Endothelial cell of umbilical vein (primary cell): ENCODE measurements at regions of chr3 and their contacts with region 1.

Region 1: DNA sequence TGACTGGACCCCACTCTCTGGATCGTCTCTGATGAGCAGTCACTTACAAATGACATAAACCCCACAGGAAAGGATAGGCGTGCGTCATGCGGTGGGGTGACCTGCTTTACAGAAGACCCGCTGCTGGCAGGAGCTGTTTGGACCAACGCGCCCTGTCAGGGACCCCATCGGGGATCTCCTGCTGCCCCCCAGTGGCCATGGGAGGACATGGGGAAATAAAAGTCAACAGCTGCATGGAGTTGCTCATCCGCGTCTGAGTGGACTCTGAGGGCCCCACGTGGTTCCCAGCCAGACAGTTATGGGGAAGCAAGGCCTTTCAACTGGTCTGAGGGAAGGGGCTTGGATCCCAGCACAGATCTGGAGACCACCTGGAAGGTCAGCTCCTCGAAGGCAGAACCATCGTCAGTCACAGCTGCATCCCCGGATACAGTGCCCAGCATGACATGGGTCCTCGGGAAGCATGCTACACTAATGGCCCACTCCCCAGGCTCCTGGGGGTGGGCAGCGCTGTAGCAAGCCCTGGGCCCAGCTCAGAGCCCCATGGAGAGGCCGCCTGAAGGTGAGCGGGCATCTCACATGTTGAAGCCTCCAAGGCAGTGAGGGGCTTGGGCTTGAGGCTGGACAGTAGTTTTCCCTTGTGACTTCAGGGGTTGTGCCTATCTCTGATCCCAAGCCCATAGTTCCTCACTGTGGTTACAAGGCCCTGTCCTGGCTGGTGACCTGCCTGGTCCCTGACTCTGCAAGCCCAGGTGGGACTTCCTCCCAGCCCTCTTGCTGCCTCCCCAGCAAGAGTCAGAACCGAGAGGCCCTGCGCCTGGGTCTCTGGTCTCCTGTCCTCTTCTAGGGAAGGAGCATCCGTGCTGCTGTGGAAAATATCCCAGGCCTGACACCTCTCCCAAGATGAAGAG is 32.3 kb downstream of the PTH1R start:
- DNase-seq: peak; percentile 81
- H3K4me3 ChIP-seq: no peak overlapping the region
- H3K27ac ChIP-seq: no peak overlapping the region
- H3K4me1 ChIP-seq: peaks cover 10% of the 10 kb centered on the region
- H3K27me3 ChIP-seq: no peaks in the 10 kb centered on the region
- CTCF ChIP-seq: peak; percentile 87 to 88
- POLR2A ChIP-seq: no peak

Region 2: GRCh38 chr3:46663591-46664135 is 246.1 kb before region 1 on chr3:
- CTCF ChIA-PET with region 1: interaction called, 10 read pairs
- POLR2A ChIA-PET with region 1: no interaction called
- dilution Hi-C with region 1: no loop called
- intact Hi-C with region 1: no loop called
- DNase-seq: peak; percentile 46
- H3K4me3 ChIP-seq: no peak overlapping the region
- H3K27ac ChIP-seq: no peak overlapping the region
- H3K4me1 ChIP-seq: no peaks in the 10 kb centered on the region
- H3K27me3 ChIP-seq: no peaks in the 10 kb centered on the region
- CTCF ChIP-seq: peak; percentile 12 to 16
- POLR2A ChIP-seq: no peak

Region 3: DNA sequence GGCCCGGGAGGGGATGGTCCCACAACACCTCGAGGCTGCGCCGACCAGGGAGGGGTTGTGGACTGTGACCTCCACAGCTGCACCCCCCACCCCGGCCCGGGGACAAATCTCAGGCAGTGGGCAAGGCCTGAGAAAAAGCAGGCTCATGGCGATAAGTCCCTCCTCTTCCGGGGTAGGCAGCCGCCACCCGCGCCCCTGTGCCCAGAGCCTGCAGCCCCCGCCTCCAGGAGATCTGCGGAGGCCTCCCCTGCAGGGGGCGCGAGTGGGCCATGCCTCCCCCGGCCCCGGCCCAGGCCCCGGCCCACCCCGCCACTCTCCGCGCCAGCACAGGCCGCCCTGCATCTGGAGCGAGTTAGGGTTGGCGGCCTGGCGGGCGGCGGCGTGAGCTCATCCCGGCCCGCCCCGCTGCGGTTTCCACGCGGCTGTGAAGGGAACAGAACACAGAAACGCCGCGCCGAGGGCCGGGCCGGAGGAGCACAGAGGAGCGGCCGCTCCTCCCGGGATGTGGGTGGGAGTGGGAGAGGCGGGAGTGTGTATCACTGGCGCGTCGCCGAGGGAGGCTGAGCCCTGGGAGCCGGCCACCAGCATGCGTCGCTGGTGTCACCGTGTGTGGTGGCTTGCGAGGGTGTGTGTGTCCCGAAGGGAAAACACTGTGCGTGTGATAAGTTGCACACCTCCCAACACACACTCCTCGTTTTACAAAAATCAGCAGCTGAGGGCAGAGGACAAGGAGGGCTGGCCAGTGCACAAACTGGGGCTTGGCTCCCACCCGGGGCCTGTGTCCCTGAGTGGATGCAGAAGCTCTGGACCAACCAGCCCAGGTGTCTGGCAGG is 63.8 kb before region 1 on chr3:
- CTCF ChIA-PET with region 1: interaction called, 13 read pairs
- POLR2A ChIA-PET with region 1: no interaction called
- dilution Hi-C with region 1: no loop called
- intact Hi-C with region 1: loop called (anchors 1 kb)
- DNase-seq: peak; percentile 56
- H3K4me3 ChIP-seq: peak overlapping the region in 2 of 3 experiments; percentile 19 to 41
- H3K27ac ChIP-seq: peak overlapping the region; percentile 3
- H3K4me1 ChIP-seq: peaks cover 14% of the 10 kb centered on the region
- H3K27me3 ChIP-seq: peaks cover 2 to 8% of the 10 kb centered on the region in 2 experiments
- CTCF ChIP-seq: peak; percentile 33 to 56
- POLR2A ChIP-seq: no peak

Region 4: DNA sequence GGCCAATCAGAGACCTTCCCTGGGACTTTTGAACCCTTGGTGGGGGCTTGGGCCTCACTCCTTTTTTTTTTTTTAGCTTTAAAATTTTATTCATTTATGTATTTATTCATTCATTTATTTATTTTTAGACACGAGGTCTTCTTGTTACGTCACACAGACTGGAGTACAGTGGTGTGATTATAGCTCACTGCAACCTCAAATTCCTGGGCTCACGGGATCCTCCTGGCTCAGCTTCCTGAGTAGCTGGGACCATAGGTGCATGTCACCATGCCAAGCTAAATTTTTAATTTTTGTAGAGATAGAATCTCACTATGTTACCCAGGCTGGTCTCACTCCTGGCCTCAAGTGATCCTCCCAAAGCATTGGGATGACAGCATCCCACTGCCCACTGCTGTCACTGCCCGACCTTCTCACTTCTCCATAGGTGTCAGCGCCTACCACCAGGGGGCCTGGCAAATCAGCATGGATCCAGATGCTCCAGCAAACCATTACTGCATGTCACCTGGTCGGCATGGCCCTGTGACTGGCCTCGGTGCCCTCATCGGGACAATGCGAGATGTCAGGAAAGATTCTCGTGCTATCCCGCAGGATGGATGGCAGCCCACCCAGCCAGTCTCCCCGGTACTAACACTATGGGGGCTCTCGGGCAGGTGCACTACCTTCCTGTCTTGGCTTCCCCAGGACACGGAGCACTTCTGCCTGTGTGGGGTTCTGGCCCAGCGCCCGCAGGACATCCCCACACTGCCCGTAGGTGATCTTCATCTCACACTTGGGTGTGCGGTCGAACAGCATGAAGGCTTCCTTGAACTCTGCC is 49.6 kb before region 1 on chr3:
- CTCF ChIA-PET with region 1: interaction called, 55 read pairs
- POLR2A ChIA-PET with region 1: no interaction called
- dilution Hi-C with region 1: no loop called
- intact Hi-C with region 1: no loop called
- DNase-seq: no peak
- H3K4me3 ChIP-seq: no peak overlapping the region
- H3K27ac ChIP-seq: no peak overlapping the region
- H3K4me1 ChIP-seq: no peaks in the 10 kb centered on the region
- H3K27me3 ChIP-seq: peaks cover 0 to 5% of the 10 kb centered on the region in 2 experiments
- CTCF ChIP-seq: peak; percentile 62 to 64
- POLR2A ChIP-seq: no peak

Region 5: DNA sequence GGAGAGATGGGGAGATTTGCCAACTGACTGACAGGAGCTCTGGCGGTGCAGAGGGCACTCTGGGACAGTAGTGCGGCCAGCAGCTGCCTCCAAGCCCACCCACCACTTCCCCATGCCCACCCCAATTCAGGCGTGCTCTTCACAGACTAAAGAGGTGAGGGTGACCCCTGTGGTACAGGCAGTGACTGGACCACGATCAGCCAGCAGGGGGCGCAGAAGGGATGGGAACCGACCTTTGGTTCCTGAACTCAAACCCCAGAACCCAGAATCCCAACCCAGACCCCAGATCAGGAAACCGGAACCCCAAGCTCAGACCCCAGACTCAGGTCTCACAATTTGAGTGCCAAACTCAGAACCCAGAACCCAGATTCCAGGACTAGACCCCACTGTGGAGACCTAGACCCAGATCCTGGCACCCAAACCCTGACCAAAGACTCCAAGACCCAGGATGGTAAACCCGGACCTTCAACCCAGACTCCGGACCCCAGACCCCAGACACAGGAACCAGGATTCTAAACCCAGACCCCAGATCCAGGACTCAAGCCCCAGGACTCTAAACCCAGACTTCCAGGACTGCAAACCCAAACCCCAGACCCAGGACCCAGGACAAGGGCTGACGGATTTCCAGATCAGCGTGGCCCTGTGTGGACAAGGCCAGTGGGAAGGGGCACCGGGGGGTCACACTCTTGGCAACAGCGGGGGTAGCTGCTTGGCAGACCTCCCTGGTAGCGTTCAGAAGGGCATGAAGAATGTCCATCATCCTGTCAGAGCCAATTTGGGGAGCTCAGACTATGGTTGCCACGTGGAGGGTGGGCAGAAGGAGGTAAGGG is 42.9 kb before region 1 on chr3:
- CTCF ChIA-PET with region 1: interaction called, 55 read pairs
- POLR2A ChIA-PET with region 1: no interaction called
- dilution Hi-C with region 1: no loop called
- intact Hi-C with region 1: loop called (anchors 1 kb)
- DNase-seq: peak; percentile 38
- H3K4me3 ChIP-seq: no peak overlapping the region
- H3K27ac ChIP-seq: no peak overlapping the region
- H3K4me1 ChIP-seq: no peaks in the 10 kb centered on the region
- H3K27me3 ChIP-seq: no peaks in the 10 kb centered on the region
- CTCF ChIP-seq: peak; percentile 82 to 94
- POLR2A ChIP-seq: no peak

Region 6: GRCh38 chr3:46935168-46935858 is 25.5 kb after region 1 on chr3:
- CTCF ChIA-PET with region 1: interaction called, 12 read pairs
- POLR2A ChIA-PET with region 1: no interaction called
- dilution Hi-C with region 1: no loop called
- intact Hi-C with region 1: no loop called
- DNase-seq: peak; percentile 98
- H3K4me3 ChIP-seq: no peak overlapping the region
- H3K27ac ChIP-seq: peak overlapping the region; percentile 87
- H3K4me1 ChIP-seq: peaks cover 62% of the 10 kb centered on the region
- H3K27me3 ChIP-seq: no peaks in the 10 kb centered on the region
- CTCF ChIP-seq: peak; percentile 50 to 72
- POLR2A ChIP-seq: peak; percentile 60